BJ (cell line): ENCODE measurements at regions of chr16 and their contacts with region 1.

Region 1: GRCh38 chr16:56450986-56451752 is at the starts of genes NUDT21 and OGFOD1:
- DNase-seq: peak; percentile 97
- H3K4me3 ChIP-seq: peak within 1 kb of the TSS; percentile 80
- H3K27me3 ChIP-seq: no peaks in the 10 kb centered on the region
- CTCF ChIP-seq: no peak
- polyA plus RNA-seq, gene NUDT21: 78.8 and 109 TPM in 2 replicates
- polyA plus RNA-seq, gene OGFOD1: 54.8 and 73.0 TPM in 2 replicates

Region 2: DNA sequence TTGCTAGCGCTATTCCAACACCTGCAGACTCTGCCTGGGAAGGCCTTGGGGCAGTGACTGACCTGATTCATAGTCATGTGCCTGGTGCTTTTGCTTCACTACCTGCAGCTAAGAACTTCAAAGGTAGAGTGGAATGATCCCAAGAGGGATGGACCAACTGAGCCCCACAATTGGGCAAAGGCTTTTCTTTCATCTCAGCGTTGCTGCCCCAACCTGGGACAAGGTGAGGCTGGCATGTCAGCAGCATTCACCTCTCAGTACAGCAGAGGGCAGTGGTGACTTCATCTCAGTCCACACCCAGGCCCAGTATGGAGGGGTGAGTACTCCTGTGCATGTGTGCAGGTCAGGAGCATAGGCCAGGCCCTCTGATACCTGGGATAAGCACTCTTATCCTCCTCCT is 409.5 kb before region 1 on chr16:
- CTCF ChIA-PET with region 1: no interaction called
- POLR2A ChIA-PET with region 1: no interaction called
- DNase-seq: no peak
- H3K4me3 ChIP-seq: no peak overlapping the region
- H3K27me3 ChIP-seq: no peaks in the 10 kb centered on the region
- CTCF ChIP-seq: peak; percentile 40

Region 3: DNA sequence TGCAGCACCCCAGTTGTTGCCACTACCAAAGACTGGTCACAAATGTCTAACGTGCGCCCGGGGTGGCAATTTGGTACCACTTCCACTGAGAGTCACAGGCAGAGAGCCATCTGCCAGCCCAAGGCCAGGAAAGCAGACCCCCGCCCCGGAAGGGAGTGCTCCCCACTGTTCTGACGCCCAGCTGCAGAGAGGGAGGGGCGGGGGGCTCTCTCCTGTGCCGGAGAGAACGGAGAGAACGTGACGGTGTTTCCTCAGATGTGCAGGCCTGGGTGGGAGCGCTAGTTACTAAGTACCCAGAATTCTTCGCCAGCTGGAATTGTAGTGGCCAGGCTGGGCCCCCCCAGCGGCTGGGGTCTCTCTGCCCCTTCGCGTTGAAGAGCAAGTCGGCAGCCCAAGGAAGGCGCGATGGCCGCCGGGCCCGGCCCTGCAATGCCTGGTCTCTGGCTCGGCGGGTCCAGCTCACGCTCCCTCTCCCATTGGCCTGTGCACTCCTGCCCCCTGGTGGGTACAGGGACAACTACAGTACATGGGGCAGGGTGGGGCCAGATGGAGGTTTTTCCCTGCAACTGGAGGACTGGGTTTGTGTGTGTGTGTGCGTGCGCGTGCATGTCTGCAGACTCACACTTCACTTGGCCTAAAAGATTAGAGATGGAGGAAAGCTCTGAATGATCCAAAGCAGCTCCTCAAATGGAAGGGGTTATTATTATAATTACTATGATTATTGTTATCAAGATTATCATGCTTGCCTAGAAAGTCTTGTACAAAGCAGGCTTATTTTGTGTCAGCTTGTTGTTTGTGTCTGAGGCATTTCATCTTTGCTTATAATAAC is 133.0 kb before region 1 on chr16:
- CTCF ChIA-PET with region 1: no interaction called
- POLR2A ChIA-PET with region 1: no interaction called
- DNase-seq: no peak
- H3K4me3 ChIP-seq: 0 out of 2 replicates have a peak overlapping the region, but pooled peaks have one; percentile 7
- H3K27me3 ChIP-seq: no peaks in the 10 kb centered on the region; the same call in 1 of the 2 replicates
- CTCF ChIP-seq: peak; percentile 92

Region 4: GRCh38 chr16:56425439-56425832 is 25.7 kb before region 1 on chr16 and contains the start of gene AMFR:
- CTCF ChIA-PET with region 1: no interaction called
- POLR2A ChIA-PET with region 1: no interaction called
- DNase-seq: peak; percentile 28
- H3K4me3 ChIP-seq: peak within 1 kb of the TSS; percentile 68
- H3K27me3 ChIP-seq: no peaks in the 10 kb centered on the region
- CTCF ChIP-seq: no peak
- polyA plus RNA-seq, gene AMFR: 90.8 and 130 TPM in 2 replicates

Region 5: DNA sequence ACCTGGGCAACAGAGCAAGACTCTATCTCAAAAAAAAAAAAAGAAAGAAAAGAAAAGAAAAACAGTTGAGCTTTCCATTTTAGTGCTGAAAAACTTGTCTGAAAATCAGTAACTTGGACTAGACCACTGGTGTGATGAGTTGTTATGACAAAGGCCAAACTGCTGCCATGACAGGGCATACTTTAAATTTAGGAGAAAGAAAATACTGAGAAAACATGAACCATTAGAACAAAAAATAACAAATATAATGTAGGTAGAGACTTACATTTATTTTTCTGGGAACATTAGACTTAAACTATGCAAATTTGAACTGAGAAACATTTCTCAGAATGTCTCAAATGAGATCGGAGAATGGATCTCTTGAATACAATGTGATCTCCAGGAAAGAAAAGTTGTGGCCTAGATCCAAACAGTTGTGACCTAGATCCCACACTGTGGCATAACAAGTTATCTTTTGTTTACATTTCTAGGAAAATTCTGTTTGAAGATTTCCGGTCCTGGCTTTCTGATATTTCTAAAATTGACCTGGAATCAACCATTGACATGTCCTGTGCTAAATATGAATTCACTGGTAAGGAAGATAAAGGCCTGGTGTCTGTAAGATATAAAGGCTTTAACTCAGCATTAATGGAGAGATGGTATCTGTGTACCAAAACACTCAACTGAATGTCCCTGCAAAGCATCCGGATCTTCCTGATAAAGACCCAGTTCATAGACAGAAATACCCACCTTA is 11.1 kb after region 1 on chr16:
- CTCF ChIA-PET with region 1: no interaction called
- POLR2A ChIA-PET with region 1: interaction called, 10 read pairs
- DNase-seq: no peak
- H3K4me3 ChIP-seq: no peak overlapping the region
- H3K27me3 ChIP-seq: no peaks in the 10 kb centered on the region
- CTCF ChIP-seq: no peak

Region 6: DNA sequence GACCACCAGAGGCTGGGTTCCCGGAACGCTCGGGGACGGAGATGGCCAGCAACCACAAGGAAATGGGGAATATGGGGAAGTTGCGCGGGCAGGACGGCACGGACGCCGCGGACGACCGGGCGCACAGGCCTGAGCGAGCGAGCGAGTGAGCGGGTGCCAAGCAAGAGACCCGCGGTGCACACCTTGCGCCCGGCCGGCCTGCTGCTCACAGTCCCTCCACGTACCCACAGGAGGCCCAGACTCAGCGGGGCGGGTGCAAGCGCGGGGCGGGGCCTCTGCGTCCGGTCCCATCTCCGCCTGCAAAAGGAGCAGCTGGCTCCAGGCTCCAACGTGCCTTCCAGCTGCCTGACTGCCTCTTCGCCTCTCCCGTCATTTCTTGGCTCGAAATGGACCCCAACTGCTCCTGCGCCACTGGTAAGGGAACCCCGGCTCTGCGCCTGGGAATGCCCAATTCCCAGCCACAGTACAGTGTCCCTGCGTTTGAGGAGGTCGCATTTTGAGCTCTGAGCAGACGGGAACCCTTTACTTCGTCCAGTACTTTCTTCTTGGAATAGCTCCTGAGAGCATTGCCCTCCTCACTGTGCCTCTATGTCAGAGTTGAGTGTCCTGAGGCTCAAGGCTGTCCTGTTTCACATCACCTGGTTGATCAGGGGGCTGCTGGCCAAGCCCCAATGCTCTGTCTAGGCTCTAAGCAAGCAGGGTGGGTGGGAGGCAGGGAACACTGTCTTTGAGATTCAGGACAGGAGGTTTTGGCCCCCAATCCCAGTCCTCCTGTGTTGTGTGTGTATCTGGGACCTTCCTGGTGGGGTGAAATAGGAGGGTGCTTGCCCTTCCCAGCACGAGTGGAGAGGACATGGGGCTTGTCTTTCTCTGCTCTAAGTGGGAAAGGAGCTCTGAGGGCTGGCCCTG is 166.3 kb after region 1 on chr16:
- CTCF ChIA-PET with region 1: no interaction called
- POLR2A ChIA-PET with region 1: no interaction called
- DNase-seq: no peak
- H3K4me3 ChIP-seq: peak overlapping the region; percentile 34
- H3K27me3 ChIP-seq: no peaks in the 10 kb centered on the region
- CTCF ChIP-seq: no peak